ENCODE measurements at regions of chr15 and their contacts with region 1.

Region 1: GRCh38 chr15:81265944-81266775 is 57.8 kb downstream of the STARD5 start:
- DNase-seq: peak; percentile 85 to 90 (median 86)
- ATAC-seq: peak; percentile 94
- H3K4me3 ChIP-seq: no peak overlapping the region
- H3K27ac ChIP-seq: no peak overlapping the region
- H3K4me1 ChIP-seq: peaks cover 15% of the 10 kb centered on the region
- H3K27me3 ChIP-seq: no peaks in the 10 kb centered on the region
- CTCF ChIP-seq: peak; percentile 73 to 89 (median 84)
- POLR2A ChIP-seq: no peak

Region 2: GRCh38 chr15:80989518-80990478 is 276.4 kb before region 1 on chr15 and contains the start of gene MESD:
- intact Hi-C with region 1: loop called (anchors 10 kb)
- DNase-seq: peak; percentile 97 to 99 (median 99)
- ATAC-seq: peak; percentile 98
- H3K4me3 ChIP-seq: peak within 1 kb of the TSS; percentile 92 to 94
- H3K27ac ChIP-seq: peak within 1 kb of the TSS; percentile 83 to 91 (median 88)
- H3K4me1 ChIP-seq: peaks cover 45% of the 10 kb centered on the region
- H3K27me3 ChIP-seq: no peaks in the 10 kb centered on the region
- CTCF ChIP-seq: no peak
- POLR2A ChIP-seq: peak; percentile 88 to 94 (median 93)
- total RNA-seq, gene MESD: 22.3 to 34.6 TPM

Region 3: DNA sequence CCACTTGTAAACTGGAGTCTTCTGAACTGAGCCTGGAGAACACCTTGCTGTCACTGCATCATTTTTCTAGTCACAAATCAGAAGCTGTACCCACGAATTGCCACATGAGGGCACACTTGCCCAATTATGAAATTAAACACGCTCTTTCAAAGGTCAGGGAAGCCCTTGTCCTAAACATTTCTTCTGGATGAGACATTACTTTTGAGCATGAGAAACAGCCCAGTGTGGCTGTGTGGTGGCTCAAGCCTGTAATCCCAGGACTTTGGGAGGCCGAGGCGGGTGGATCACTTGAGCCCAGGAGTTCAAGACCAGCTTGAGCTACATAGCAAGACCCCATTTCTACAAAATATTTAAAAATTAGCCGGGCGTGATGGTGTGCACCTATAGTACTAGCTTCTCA is 159.6 kb before region 1 on chr15:
- intact Hi-C with region 1: loop called (anchors 5 kb)
- DNase-seq: peak; percentile 64 to 77 (median 69)
- ATAC-seq: peak; percentile 87
- H3K4me3 ChIP-seq: no peak overlapping the region
- H3K27ac ChIP-seq: no peak overlapping the region
- H3K4me1 ChIP-seq: peaks cover 6% of the 10 kb centered on the region
- H3K27me3 ChIP-seq: no peaks in the 10 kb centered on the region
- CTCF ChIP-seq: peak; percentile 59 to 91 (median 88)
- POLR2A ChIP-seq: no peak

Region 4: DNA sequence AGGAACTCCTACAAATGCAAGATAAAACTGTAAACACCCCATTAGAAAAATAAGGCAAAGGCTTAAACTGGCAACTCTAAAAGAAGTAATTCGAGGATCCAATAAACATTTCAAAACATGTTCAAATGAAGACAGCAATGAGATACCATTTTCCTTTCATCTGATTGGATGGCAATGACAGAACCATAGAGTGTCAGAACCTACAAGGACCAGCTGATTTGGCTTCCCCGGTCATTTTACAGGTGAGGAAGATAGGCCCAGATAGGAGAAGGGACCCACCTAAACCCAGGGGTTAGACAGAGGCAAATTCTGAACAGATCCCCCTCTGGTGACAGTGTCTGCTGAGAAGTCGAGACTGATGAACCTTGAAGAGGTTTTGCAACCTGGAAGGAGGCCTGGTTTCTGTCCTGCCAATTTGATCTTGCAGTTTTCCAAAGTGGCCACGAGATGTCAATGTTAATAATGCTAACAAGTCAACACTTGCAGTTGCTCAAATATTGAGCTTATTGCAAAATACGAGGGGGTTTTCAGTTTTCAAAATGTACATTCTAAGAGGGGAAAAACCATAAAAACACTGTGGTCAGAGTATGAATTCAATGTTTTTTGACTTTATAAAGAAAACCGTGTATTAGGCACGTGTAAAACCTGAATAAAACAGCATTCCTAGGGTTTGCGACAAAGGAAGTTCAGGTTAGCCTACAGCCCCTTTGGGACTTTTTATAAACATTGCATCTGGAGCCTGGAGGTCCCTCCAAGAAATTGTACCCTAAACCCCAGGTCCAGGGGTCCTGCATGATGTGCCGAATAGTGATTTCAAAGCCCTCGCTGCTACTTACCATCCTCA is 110.6 kb before region 1 on chr15:
- intact Hi-C with region 1: loop called (anchors 10 kb)
- DNase-seq: peak; percentile 31 to 57 (median 49)
- ATAC-seq: peak; percentile 68
- H3K4me3 ChIP-seq: no peak overlapping the region
- H3K27ac ChIP-seq: no peak overlapping the region
- H3K4me1 ChIP-seq: no peaks in the 10 kb centered on the region
- H3K27me3 ChIP-seq: no peaks in the 10 kb centered on the region
- CTCF ChIP-seq: peak; percentile 19 to 75 (median 64)
- POLR2A ChIP-seq: no peak